ENCODE measurements at regions of chr4 and their contacts with region 1.

Region 1: GRCh38 chr4:112284662-112285411 is 867 bp downstream of the TIFA start:
- DNase-seq: peak in 1 of 5 donors; percentile 45
- H3K4me3 ChIP-seq: peak overlapping the region; percentile 95
- H3K4me3 Mint-ChIP-seq: peak overlapping the region; percentile 82 to 98 (median 95)
- H3K27ac ChIP-seq: peak overlapping the region; percentile 85
- H3K27ac Mint-ChIP-seq: peak overlapping the region; percentile 91 to 98 (median 94)
- H3K4me1 ChIP-seq: peaks cover 50% of the 10 kb centered on the region
- H3K4me1 Mint-ChIP-seq: peaks cover 82 to 90% (median 84%) of the 10 kb centered on the region in 3 donors
- H3K27me3 ChIP-seq: no peaks in the 10 kb centered on the region
- H3K27me3 Mint-ChIP-seq: no peaks in the 10 kb centered on the region

Region 2: DNA sequence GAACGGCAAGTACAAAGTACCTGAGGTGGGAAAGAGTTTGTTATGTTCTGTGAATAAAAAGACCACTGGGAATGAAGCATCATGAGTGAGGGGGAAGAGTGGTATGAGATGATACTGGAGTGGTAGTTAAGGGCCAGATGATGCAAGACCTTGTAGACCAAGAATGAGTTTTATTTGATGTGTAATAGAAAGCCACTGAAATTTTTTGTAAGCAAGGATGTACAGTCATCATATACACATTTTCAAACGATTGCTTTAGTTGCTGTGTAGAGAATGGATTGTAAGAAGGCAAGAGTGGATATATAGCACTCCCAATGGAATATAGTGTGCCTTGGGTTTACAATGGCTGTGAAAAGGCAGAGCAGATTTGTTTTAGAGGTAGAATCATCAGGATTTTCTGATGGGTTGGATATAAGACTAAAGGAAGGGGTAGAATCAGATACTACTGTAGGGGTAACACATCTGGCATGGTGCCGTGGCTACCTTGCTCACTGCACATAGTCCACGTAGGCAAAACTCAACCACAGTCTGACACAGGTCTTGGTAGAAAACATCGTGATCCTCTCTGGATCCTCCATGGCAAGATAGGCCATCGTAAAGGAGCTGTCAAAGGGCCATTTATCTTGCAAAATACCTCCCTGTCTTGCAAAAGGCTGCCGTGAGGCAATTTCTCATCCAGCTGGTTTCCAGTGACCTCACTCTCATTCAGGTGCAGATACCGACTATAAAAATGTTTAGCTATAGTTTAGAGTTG is 14.0 kb before region 1 on chr4:
- CTCF ChIA-PET with region 1: interaction called, 10 read pairs
- POLR2A ChIA-PET with region 1: interaction called, 20 read pairs
- DNase-seq: no peak
- H3K4me3 ChIP-seq: no peak overlapping the region
- H3K4me3 Mint-ChIP-seq: no peak overlapping the region
- H3K27ac ChIP-seq: no peak overlapping the region
- H3K27ac Mint-ChIP-seq: peak overlapping the region in 4 of 8 donors; percentile 7 to 76 (median 20)
- H3K4me1 ChIP-seq: no peaks in the 10 kb centered on the region
- H3K4me1 Mint-ChIP-seq: peaks cover 31 to 56% (median 32%) of the 10 kb centered on the region in 3 donors
- H3K27me3 ChIP-seq: no peaks in the 10 kb centered on the region
- H3K27me3 Mint-ChIP-seq: no peaks in the 10 kb centered on the region

Region 3: DNA sequence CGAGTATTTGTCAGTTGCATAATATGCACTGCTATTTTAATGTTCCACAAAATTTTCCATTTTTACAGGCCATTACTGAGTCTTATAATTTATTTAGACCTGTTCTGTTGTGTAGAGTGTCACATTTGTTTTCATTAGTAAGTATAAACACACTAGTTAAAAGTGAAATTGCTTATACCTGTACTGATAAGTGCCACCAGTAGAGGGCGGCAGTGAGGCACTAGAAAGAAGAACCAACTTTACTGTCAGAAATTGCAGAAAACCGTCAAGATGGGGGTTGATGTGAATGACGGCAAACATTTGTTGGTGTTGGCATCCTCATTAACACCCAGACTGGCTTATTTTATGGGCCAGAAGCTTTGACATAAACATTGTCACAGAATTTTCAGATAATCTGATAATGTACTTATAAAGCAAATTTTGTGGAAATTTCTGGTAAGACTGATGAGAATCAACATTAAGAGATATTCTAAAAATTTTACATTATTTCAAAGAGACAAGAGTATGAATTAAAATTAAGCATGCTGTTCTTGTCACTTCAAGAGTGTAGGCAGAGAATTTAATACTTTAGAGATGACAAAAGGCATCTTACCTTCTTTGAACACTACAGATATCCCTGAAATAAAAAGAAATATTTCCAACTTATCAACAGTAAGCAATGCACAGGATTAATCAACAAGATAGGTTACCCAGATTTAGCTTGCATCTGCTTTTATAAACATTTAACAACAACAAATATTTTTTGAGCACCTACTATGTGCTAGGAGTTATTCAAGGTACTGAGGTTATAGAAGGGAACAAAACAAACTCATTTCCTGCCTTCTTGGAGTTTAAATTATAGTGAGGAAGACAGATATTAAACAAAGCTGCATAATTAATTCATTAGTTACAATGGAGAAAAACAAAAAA is 37.2 kb after region 1 on chr4:
- CTCF ChIA-PET with region 1: interaction called, 15 read pairs
- POLR2A ChIA-PET with region 1: no interaction called
- DNase-seq: peak; percentile 57 to 82 (median 66)
- H3K4me3 ChIP-seq: no peak overlapping the region
- H3K4me3 Mint-ChIP-seq: peak overlapping the region in 4 of 7 donors; percentile 18 to 53 (median 42)
- H3K27ac ChIP-seq: no peak overlapping the region
- H3K27ac Mint-ChIP-seq: no peak overlapping the region
- H3K4me1 ChIP-seq: peaks cover 4% of the 10 kb centered on the region
- H3K4me1 Mint-ChIP-seq: peaks cover 5 to 19% (median 12%) of the 10 kb centered on the region in 3 donors
- H3K27me3 ChIP-seq: no peaks in the 10 kb centered on the region
- H3K27me3 Mint-ChIP-seq: peaks cover 0 to 4% of the 10 kb centered on the region in 2 donors

Region 4: GRCh38 chr4:112377171-112377570 is 92.3 kb after region 1 on chr4:
- CTCF ChIA-PET with region 1: no interaction called
- POLR2A ChIA-PET with region 1: no interaction called
- DNase-seq: no peak
- H3K4me3 ChIP-seq: no peak overlapping the region
- H3K4me3 Mint-ChIP-seq: no peak overlapping the region
- H3K27ac ChIP-seq: no peak overlapping the region
- H3K27ac Mint-ChIP-seq: no peak overlapping the region
- H3K4me1 ChIP-seq: no peaks in the 10 kb centered on the region
- H3K4me1 Mint-ChIP-seq: no peaks in the 10 kb centered on the region
- H3K27me3 ChIP-seq: no peaks in the 10 kb centered on the region
- H3K27me3 Mint-ChIP-seq: no peaks in the 10 kb centered on the region